ENCODE measurements at regions of chr20 and their contacts with region 1.

Region 1: DNA sequence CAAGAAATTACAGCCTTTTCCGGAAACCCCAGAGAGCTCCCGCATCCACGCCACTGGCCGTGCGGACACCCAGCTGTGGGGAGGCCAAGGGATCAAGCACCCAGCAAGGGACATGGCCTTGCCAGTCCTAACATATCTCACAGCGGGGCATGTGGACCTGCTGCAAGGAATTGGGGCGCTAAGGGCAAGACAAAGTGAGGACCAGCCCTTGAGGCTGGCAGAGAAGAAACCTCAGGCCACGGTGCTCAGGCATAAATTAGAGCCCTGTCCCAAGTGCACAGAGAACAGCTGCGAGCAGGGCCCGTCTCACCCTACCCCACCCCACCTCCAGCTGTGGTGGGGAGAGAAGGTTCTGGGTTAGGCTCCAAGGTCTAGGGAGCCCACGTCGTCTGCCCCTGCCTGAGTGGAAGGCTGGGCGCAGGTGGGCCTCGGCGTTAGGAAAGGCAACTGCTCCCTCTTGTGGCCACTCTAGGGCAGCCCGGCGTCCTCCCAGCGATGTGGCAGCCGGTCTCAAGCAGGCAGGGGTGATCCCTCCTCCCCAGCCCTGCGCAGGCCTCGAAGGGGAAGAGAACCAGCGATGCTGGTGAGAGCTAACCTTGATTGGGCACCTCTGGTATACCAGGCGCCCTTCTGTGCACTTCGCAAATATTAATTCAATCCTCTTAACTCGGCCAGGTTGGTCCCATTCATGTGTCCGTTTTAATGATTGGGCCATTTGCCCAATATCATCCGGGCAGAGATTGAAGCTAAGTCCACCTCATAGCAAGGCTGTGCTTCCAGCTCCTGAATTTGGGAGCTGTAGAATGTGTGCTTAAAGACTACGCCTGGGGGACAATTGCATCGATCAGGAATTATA is 235.8 kb downstream of the NFATC2 start:
- DNase-seq: peak; percentile 84
- H3K4me3 ChIP-seq: no peak overlapping the region
- H3K27ac ChIP-seq: no peak overlapping the region
- H3K4me1 ChIP-seq: no peaks in the 10 kb centered on the region
- H3K27me3 ChIP-seq: no peaks in the 10 kb centered on the region

Region 2: DNA sequence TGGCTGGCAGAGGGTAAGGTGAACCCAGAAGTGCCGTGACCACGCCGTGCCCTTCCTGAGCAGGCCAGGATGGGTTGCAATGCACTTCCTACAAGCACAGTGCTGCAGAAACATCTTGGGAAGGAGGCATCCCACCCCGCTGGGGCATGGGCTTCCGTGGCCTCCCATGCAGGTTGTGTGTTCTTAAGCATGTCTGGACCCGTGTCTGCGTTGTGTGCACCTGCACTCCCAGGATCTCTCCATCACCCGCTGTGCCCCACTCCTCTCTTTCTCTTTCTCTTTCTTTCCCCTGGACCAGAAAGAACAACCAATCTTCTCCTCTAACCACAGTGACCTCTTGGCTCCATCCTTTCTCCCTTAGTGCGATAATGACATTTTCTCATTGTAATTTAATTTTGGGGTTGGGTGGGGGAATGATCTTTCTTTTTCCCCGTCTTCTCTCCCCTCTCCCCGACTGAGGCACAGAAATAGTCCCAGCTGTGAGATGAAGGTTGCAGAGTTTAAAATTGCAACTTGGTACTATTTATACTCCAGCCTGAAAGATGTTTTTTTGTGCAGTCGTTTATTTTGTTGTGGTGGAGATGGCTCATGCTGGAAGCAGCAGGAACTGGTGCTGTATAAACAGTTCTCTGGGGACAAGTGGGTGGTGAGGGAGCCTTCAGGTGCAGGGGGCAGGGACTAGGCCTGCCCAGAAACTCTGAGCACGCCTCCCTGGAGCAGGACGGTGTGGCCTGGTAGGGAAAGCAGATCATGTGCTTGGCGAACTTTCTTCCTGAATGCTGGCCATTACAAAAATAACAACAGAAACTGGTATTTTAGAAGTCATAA is 491.4 kb before region 1 on chr20:
- in situ Hi-C with region 1: loop called (anchors 25 kb)
- DNase-seq: peak; percentile 60
- H3K4me3 ChIP-seq: no peak overlapping the region
- H3K27ac ChIP-seq: no peak overlapping the region
- H3K4me1 ChIP-seq: peaks cover 16% of the 10 kb centered on the region
- H3K27me3 ChIP-seq: no peaks in the 10 kb centered on the region

Region 3: DNA sequence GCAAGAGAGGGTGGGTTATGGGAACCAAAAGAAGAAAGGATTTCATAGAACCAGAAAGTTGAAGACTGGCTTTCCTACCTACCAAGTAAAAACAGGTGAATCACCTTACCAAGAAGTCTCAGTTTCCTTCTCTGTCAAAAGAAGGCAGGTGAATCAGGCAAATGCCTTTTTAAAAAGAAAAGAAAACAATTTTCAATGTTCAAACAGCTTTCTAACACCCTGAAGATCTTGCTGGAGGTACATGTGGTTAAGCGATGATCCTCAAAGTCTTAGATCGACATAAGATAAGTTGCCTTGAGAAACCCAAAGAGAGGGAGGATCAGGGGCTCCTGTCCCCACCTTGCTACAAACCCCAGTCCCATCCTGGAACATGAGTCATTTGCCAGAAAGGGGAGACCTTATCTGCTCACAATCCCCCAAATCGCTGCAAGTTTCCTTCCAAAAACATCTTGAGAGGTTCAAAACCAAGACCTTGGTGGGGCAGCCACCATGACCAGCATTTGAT is 164.2 kb after region 1 on chr20:
- in situ Hi-C with region 1: no loop called
- DNase-seq: no peak
- H3K4me3 ChIP-seq: no peak overlapping the region
- H3K27ac ChIP-seq: no peak overlapping the region
- H3K4me1 ChIP-seq: no peaks in the 10 kb centered on the region
- H3K27me3 ChIP-seq: no peaks in the 10 kb centered on the region

Region 4: GRCh38 chr20:51487565-51488268 is 181.0 kb after region 1 on chr20:
- in situ Hi-C with region 1: no loop called
- DNase-seq: peak; percentile 82
- H3K4me3 ChIP-seq: no peak overlapping the region
- H3K27ac ChIP-seq: 0 out of 2 replicates have a peak overlapping the region, but pooled peaks have one; percentile 12
- H3K4me1 ChIP-seq: peaks cover 12% of the 10 kb centered on the region; the same call in 1 of the 2 replicates
- H3K27me3 ChIP-seq: peaks cover 6% of the 10 kb centered on the region; the same call in 1 of the 2 replicates

Measured in GM23248 (cell line).